Transverse colon (tissue), 4 donors: ENCODE measurements at regions of chr18 and their contacts with region 1.

Region 1: GRCh38 chr18:4908328-4908727 is 288.7 kb downstream of the AKAIN1 start:
- DNase-seq: no peak
- H3K4me3 ChIP-seq: no peak overlapping the region
- H3K27ac ChIP-seq: no peak overlapping the region
- H3K4me1 ChIP-seq: no peaks in the 10 kb centered on the region
- H3K27me3 ChIP-seq: no peaks in the 10 kb centered on the region
- CTCF ChIP-seq: no peak
- EP300 ChIP-seq: no peak
- POLR2A ChIP-seq: no peak

Region 2: GRCh38 chr18:3579701-3580100 is 1328.6 kb before region 1 on chr18:
- in situ Hi-C with region 1: no loop called
- intact Hi-C with region 1: no loop called
- DNase-seq: no peak
- H3K4me3 ChIP-seq: no peak overlapping the region
- H3K27ac ChIP-seq: no peak overlapping the region
- H3K4me1 ChIP-seq: peaks cover 0 to 16% (median 3%) of the 10 kb centered on the region in 4 donors
- H3K27me3 ChIP-seq: no peaks in the 10 kb centered on the region
- CTCF ChIP-seq: no peak
- EP300 ChIP-seq: no peak
- POLR2A ChIP-seq: no peak

Region 3: DNA sequence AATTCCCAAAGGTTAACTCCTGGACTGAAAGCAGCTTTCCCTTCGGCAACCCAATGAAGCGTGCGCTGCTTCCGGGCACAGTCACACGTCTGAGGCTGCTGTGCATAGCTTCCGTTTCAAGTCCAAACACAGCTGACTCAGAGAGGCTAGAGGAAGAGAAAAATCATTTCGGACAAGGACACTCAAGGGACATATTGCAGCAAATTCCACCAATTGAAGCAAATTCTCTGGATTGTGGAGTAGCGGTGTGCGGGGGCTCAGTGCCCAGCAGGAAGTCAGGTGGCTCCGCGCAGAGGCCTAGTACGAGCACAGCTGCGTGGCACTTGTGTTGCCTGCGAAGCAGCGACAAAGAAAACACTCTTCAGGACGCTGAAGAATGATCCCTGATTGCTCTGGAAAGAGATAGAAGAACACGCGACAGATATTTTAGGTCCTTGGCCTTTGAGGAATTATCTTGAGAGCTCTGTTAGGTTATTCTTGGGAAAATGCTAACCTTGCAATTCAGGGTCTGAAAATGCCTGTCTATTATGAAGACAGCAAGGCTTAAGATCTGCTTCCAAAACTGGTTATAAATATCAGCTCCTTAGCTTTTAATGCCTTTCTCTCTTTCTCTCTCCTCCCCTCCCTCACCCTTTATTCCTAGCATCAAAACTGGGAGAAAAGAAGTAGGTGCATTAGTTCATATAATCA is 100.6 kb before region 1 on chr18:
- in situ Hi-C with region 1: loop called in 1 of 4 experiments (anchors 25 kb)
- intact Hi-C with region 1: no loop called
- DNase-seq: no peak
- H3K4me3 ChIP-seq: no peak overlapping the region
- H3K27ac ChIP-seq: no peak overlapping the region
- H3K4me1 ChIP-seq: no peaks in the 10 kb centered on the region
- H3K27me3 ChIP-seq: no peaks in the 10 kb centered on the region
- CTCF ChIP-seq: no peak
- EP300 ChIP-seq: no peak
- POLR2A ChIP-seq: no peak

Region 4: GRCh38 chr18:4847056-4847455 is 61.3 kb before region 1 on chr18:
- in situ Hi-C with region 1: loop called in 1 of 4 experiments (anchors 10 kb)
- intact Hi-C with region 1: no loop called
- DNase-seq: no peak
- H3K4me3 ChIP-seq: no peak overlapping the region
- H3K27ac ChIP-seq: no peak overlapping the region
- H3K4me1 ChIP-seq: no peaks in the 10 kb centered on the region
- H3K27me3 ChIP-seq: no peaks in the 10 kb centered on the region
- CTCF ChIP-seq: no peak
- EP300 ChIP-seq: no peak
- POLR2A ChIP-seq: no peak

Region 5: DNA sequence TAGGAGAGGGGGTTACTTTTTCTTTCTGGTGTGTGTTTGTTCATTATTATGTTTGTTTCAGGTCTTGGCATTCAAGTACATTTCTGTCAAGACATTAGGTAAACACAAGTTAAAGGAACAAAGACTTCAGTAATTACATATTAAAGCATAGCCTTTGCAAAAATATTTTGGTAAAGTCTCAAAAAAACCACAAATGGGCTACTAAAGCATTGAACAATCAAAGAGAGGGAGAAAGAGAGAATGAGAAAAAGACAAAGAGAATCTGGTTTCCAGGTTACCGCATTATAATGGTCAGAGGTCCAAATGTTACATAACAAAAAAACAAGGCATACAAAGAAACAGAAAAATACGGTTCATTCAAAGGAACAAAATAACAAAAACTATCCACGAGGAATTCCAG is 39.2 kb before region 1 on chr18:
- in situ Hi-C with region 1: no loop called
- intact Hi-C with region 1: no loop called
- DNase-seq: no peak
- H3K4me3 ChIP-seq: no peak overlapping the region
- H3K27ac ChIP-seq: no peak overlapping the region
- H3K4me1 ChIP-seq: no peaks in the 10 kb centered on the region
- H3K27me3 ChIP-seq: no peaks in the 10 kb centered on the region
- CTCF ChIP-seq: no peak
- EP300 ChIP-seq: no peak
- POLR2A ChIP-seq: no peak

Region 6: DNA sequence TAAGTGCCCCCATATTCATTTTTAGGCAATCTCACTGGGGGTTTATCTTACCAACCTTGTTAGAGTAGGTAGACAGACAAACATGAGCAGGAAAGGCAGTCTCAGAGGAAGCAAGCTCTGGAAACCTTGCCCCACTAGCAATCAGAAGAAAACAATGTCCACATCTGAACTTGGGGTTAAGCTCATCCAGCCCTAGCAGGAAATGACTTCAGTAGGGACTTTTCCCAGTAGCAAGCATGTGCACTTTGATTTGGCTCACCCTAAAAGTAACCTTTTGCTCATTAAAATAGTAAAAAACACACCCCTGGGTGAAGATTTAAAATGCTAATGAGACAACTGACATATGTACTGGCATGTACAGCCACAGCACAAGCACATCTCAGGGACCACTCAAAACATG is 113.2 kb after region 1 on chr18:
- in situ Hi-C with region 1: loop called in 1 of 4 experiments (anchors 25 kb)
- intact Hi-C with region 1: no loop called
- DNase-seq: no peak
- H3K4me3 ChIP-seq: no peak overlapping the region
- H3K27ac ChIP-seq: no peak overlapping the region
- H3K4me1 ChIP-seq: no peaks in the 10 kb centered on the region
- H3K27me3 ChIP-seq: no peaks in the 10 kb centered on the region
- CTCF ChIP-seq: no peak
- EP300 ChIP-seq: no peak
- POLR2A ChIP-seq: no peak